ENCODE measurements at regions of chr2 and their contacts with region 1.

Region 1: DNA sequence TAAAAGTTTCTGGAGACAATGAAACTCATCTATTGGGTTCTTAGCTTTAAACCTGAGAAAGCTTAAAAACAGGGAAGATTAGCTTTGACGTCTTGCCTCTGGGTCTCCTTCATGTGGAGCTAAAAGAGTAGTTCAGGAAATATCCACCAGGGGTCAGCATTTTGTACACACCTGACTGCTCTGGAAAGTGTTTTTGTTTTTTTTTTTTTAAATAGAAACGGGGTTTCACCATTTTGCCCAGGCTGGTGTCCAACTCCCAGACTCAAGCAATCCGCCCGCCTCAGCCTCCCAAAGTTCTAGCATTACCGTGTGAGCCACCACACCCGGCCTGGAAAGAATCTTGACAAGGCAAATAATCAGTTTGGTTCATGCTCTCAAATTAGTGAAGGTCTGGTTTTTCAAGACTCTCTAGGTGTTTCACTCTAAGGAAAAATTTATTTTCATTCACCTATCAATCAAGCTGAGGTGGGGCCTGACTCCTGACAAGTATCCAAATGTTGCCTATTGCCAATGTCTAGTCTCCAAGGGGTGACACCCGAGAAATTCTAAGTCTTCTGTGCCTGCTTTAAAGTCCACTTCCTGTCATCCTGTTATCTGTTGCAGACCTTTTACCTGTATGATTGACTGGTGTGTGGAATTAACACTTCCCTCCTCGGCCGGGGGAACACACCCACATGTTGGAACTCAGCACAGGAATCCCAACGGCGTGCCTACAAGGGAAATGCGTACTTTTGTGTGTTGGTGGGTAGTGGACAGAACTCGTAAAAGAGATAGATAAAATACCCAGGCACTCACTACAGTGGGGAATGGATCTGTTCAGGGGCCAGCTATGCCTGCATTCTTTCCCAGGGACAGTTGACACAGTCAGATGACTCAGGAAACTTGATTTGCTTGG is 11.3 kb downstream of the IL1RN start:
- DNase-seq: peak; percentile 62
- H3K4me3 ChIP-seq: no peak overlapping the region
- H3K27ac ChIP-seq: no peak overlapping the region
- H3K4me1 ChIP-seq: no peaks in the 10 kb centered on the region
- H3K27me3 ChIP-seq: peaks cover 0 to 6% of the 10 kb centered on the region in 2 experiments
- CTCF ChIP-seq: peak; percentile 47 to 69
- POLR2A ChIP-seq: no peak

Region 2: GRCh38 chr2:113080134-113080533 is 58.5 kb before region 1 on chr2:
- CTCF ChIA-PET with region 1: interaction called, 10 read pairs
- POLR2A ChIA-PET with region 1: no interaction called
- dilution Hi-C with region 1: no loop called
- intact Hi-C with region 1: loop called (anchors 2 kb)
- DNase-seq: peak; percentile 17
- H3K4me3 ChIP-seq: no peak overlapping the region
- H3K27ac ChIP-seq: no peak overlapping the region
- H3K4me1 ChIP-seq: no peaks in the 10 kb centered on the region
- H3K27me3 ChIP-seq: peaks cover 3 to 10% of the 10 kb centered on the region in 2 experiments
- CTCF ChIP-seq: peak; percentile 46 to 58
- POLR2A ChIP-seq: no peak

Region 3: DNA sequence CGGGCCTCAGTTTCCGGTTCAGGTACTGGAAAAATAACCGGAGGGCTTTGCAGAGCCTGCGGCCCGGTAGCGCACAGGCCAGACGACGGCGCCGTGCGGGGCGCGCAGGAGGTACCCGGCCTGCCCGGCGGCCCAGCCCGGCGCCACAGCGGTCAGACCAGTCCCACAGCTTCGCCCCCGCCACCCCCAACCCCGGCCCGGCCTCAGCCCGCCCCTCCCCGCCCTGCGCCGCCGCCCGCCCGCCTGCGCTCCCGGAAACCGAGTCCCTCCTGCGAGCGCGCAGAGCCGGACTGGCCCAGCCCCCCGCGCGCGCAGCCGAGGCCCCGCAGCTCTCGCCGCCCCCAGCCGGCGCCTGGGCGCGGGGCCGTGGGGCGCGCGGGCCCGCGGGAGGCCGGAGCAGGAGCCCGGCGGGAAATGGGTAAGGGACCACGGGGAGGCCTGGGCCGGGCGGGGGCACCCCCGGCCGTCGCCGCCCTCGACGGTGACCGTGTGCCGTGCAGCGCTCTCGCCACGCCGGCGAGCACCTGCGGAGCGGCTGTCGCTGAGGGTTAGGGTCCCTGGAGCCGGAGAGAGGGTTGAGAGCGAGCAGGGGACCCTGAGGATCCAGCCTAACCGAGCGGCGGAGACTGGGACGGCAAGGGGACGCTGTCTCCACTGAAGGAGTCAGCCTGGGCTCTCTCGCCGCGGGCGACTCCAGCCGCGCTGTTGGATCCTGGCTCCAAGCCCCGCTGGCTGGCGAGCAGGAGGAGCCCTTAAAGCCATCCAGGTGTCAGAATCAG is 18.6 kb after region 1 on chr2:
- CTCF ChIA-PET with region 1: interaction called, 48 read pairs
- POLR2A ChIA-PET with region 1: no interaction called
- dilution Hi-C with region 1: no loop called
- intact Hi-C with region 1: no loop called
- DNase-seq: no peak
- H3K4me3 ChIP-seq: no peak overlapping the region
- H3K27ac ChIP-seq: no peak overlapping the region
- H3K4me1 ChIP-seq: peaks cover 6% of the 10 kb centered on the region
- H3K27me3 ChIP-seq: peaks cover 32 to 36% of the 10 kb centered on the region in 2 experiments
- CTCF ChIP-seq: no peak
- POLR2A ChIP-seq: no peak

Region 4: DNA sequence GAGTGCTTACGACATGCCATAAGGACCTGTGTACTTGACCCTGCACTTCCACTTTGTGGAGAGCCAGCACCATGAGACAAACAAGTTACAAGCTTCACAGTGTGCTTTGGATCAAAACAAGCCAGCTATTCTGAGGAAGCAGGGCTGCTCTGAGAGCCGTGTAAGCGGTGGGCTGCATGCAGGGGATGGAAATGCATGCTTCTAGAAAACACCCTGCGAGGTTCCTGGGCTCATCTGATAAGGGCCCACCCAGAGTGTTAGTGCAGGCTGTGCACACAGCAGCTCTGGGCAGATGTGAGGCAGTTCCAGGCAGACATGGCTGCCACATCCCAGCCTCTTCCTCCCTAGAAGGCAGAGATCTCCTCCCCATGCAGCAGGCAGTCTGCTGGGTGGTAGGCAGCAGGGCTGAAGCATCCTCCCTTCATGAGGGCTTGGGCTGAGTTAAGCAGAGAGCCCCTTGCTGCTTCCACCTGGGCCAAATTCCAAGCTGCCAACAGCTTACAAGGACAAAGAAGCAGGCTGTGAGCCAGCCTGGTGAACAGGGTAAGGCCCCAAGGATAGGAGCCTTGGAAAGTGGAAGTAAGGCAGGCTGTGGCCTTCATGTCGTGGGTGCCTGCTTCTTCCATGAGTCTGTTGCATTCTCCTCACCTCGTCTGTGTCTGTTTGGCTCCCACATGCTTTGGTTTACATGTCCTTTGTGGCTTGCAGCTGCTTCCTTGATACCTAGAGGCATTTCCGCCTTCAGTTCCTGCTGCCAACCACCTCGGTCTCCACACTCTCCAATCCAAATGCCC is 42.8 kb after region 1 on chr2:
- CTCF ChIA-PET with region 1: interaction called, 29 read pairs
- POLR2A ChIA-PET with region 1: no interaction called
- dilution Hi-C with region 1: no loop called
- intact Hi-C with region 1: no loop called
- DNase-seq: peak; percentile 12
- H3K4me3 ChIP-seq: no peak overlapping the region
- H3K27ac ChIP-seq: no peak overlapping the region
- H3K4me1 ChIP-seq: no peaks in the 10 kb centered on the region
- H3K27me3 ChIP-seq: peaks cover 0 to 2% of the 10 kb centered on the region in 2 experiments
- CTCF ChIP-seq: no peak
- POLR2A ChIP-seq: no peak

Region 5: GRCh38 chr2:113219889-113220641 is 81.4 kb after region 1 on chr2:
- CTCF ChIA-PET with region 1: interaction called, 11 read pairs
- POLR2A ChIA-PET with region 1: no interaction called
- dilution Hi-C with region 1: no loop called
- intact Hi-C with region 1: no loop called
- DNase-seq: no peak
- H3K4me3 ChIP-seq: no peak overlapping the region
- H3K27ac ChIP-seq: no peak overlapping the region
- H3K4me1 ChIP-seq: peaks cover 16% of the 10 kb centered on the region
- H3K27me3 ChIP-seq: peaks cover 0 to 5% of the 10 kb centered on the region in 2 experiments
- CTCF ChIP-seq: no peak
- POLR2A ChIP-seq: no peak

Region 6: GRCh38 chr2:113390124-113390849 is 251.6 kb after region 1 on chr2:
- CTCF ChIA-PET with region 1: interaction called, 131 read pairs
- POLR2A ChIA-PET with region 1: no interaction called
- dilution Hi-C with region 1: no loop called
- intact Hi-C with region 1: loop called (anchors 1 kb)
- DNase-seq: peak; percentile 90
- H3K4me3 ChIP-seq: no peak overlapping the region
- H3K27ac ChIP-seq: no peak overlapping the region
- H3K4me1 ChIP-seq: no peaks in the 10 kb centered on the region
- H3K27me3 ChIP-seq: peaks cover 2 to 6% of the 10 kb centered on the region in 2 experiments
- CTCF ChIP-seq: peak; percentile 57 to 80
- POLR2A ChIP-seq: no peak